Activated B cell treated with CpG ODN at 0.5 μM for 24 hours (primary cell): ENCODE measurements at regions of chr20 and their contacts with region 1.

Region 1: GRCh38 chr20:39049684-39050554 is 87.8 kb downstream of the DHX35 start:
- DNase-seq: peak; percentile 83
- ATAC-seq: peak; percentile 87
- H3K4me3 Mint-ChIP-seq: peak overlapping the region; percentile 83
- H3K27ac Mint-ChIP-seq: peak overlapping the region; percentile 10
- H3K4me1 Mint-ChIP-seq: peaks cover 6% of the 10 kb centered on the region
- H3K27me3 Mint-ChIP-seq: peaks cover 5% of the 10 kb centered on the region
- CTCF ChIP-seq: no peak

Region 2: GRCh38 chr20:38633577-38634093 is 416.3 kb before region 1 on chr20:
- CTCF ChIA-PET with region 1: interaction called, 7 read pairs
- POLR2A ChIA-PET with region 1: no interaction called
- intact Hi-C with region 1: loop called (anchors 1 kb)
- DNase-seq: peak; percentile 31
- ATAC-seq: peak; percentile 96
- H3K4me3 Mint-ChIP-seq: no peak overlapping the region
- H3K27ac Mint-ChIP-seq: no peak overlapping the region
- H3K4me1 Mint-ChIP-seq: peaks cover 3% of the 10 kb centered on the region
- H3K27me3 Mint-ChIP-seq: peaks cover 13% of the 10 kb centered on the region
- CTCF ChIP-seq: peak; percentile 69

Region 3: GRCh38 chr20:38730989-38731737 is 318.8 kb before region 1 on chr20:
- CTCF ChIA-PET with region 1: no interaction called
- POLR2A ChIA-PET with region 1: no interaction called
- intact Hi-C with region 1: loop called (anchors 5 kb)
- DNase-seq: peak; percentile 68
- ATAC-seq: peak; percentile 76
- H3K4me3 Mint-ChIP-seq: peak overlapping the region; percentile 65
- H3K27ac Mint-ChIP-seq: no peak overlapping the region
- H3K4me1 Mint-ChIP-seq: peaks cover 52% of the 10 kb centered on the region
- H3K27me3 Mint-ChIP-seq: peaks cover 88% of the 10 kb centered on the region
- CTCF ChIP-seq: peak; percentile 77

Region 4: GRCh38 chr20:39075731-39076130 is 25.8 kb after region 1 on chr20:
- CTCF ChIA-PET with region 1: interaction called, 101 read pairs
- POLR2A ChIA-PET with region 1: no interaction called
- intact Hi-C with region 1: no loop called
- DNase-seq: no peak
- ATAC-seq: no peak
- H3K4me3 Mint-ChIP-seq: no peak overlapping the region
- H3K27ac Mint-ChIP-seq: no peak overlapping the region
- H3K4me1 Mint-ChIP-seq: no peaks in the 10 kb centered on the region
- H3K27me3 Mint-ChIP-seq: peaks cover 28% of the 10 kb centered on the region
- CTCF ChIP-seq: no peak

Region 5: GRCh38 chr20:40962730-40963504 is 1913.0 kb after region 1 on chr20:
- CTCF ChIA-PET with region 1: interaction called, 5 read pairs
- POLR2A ChIA-PET with region 1: no interaction called
- intact Hi-C with region 1: loop called (anchors 1 kb)
- DNase-seq: peak; percentile 61
- ATAC-seq: peak; percentile 81
- H3K4me3 Mint-ChIP-seq: no peak overlapping the region
- H3K27ac Mint-ChIP-seq: no peak overlapping the region
- H3K4me1 Mint-ChIP-seq: peaks cover 5% of the 10 kb centered on the region
- H3K27me3 Mint-ChIP-seq: peaks cover 5% of the 10 kb centered on the region
- CTCF ChIP-seq: peak; percentile 52